Ascending aorta (tissue), 2 donors: ENCODE measurements at regions of chr6 and their contacts with region 1.

Region 1: GRCh38 chr6:63571881-63572732 is at the starts of genes LOC128125822 and PTP4A1:
- DNase-seq: peak; percentile 91 to 99
- H3K4me3 ChIP-seq: peak within 1 kb of the TSS; percentile 89 to 91
- H3K27ac ChIP-seq: peak within 1 kb of the TSS; percentile 98
- H3K4me1 ChIP-seq: peaks cover 0 to 10% of the 10 kb centered on the region in 2 donors
- H3K27me3 ChIP-seq: no peaks in the 10 kb centered on the region
- CTCF ChIP-seq: no peak
- total RNA-seq, gene PTP4A1: 33.3 TPM

Region 2: GRCh38 chr6:63609231-63609630 is 37.1 kb after region 1 on chr6:
- intact Hi-C with region 1: no loop called
- DNase-seq: no peak
- H3K4me3 ChIP-seq: no peak overlapping the region
- H3K27ac ChIP-seq: no peak overlapping the region
- H3K4me1 ChIP-seq: no peaks in the 10 kb centered on the region
- H3K27me3 ChIP-seq: no peaks in the 10 kb centered on the region
- CTCF ChIP-seq: no peak

Region 3: GRCh38 chr6:63635588-63636517 is 63.7 kb after region 1 on chr6 and contains the start of gene PHF3:
- intact Hi-C with region 1: loop called (anchors 1 kb)
- DNase-seq: peak; percentile 21 to 91
- H3K4me3 ChIP-seq: peak within 1 kb of the TSS; percentile 80 to 82
- H3K27ac ChIP-seq: peak within 1 kb of the TSS; percentile 88 to 96
- H3K4me1 ChIP-seq: peaks cover 0 to 21% of the 10 kb centered on the region in 2 donors
- H3K27me3 ChIP-seq: no peaks in the 10 kb centered on the region
- CTCF ChIP-seq: peak in 2 of 3 experiments; percentile 1 to 14
- total RNA-seq, gene PHF3: 31.5 TPM

Region 4: GRCh38 chr6:63649269-63649668 is 77.2 kb after region 1 on chr6:
- intact Hi-C with region 1: no loop called
- DNase-seq: no peak
- H3K4me3 ChIP-seq: no peak overlapping the region
- H3K27ac ChIP-seq: no peak overlapping the region
- H3K4me1 ChIP-seq: peaks cover 2 to 31% of the 10 kb centered on the region in 2 donors
- H3K27me3 ChIP-seq: no peaks in the 10 kb centered on the region
- CTCF ChIP-seq: no peak